Transverse colon (tissue), 4 donors: ENCODE measurements at regions of chr9 and their contacts with region 1.

Region 1: GRCh38 chr9:19967216-19967887 is 178.5 kb upstream of the SLC24A2 start:
- DNase-seq: no peak
- H3K4me3 ChIP-seq: no peak overlapping the region
- H3K27ac ChIP-seq: no peak overlapping the region
- H3K4me1 ChIP-seq: no peaks in the 10 kb centered on the region
- H3K27me3 ChIP-seq: no peaks in the 10 kb centered on the region
- CTCF ChIP-seq: no peak
- EP300 ChIP-seq: no peak
- POLR2A ChIP-seq: no peak

Region 2: DNA sequence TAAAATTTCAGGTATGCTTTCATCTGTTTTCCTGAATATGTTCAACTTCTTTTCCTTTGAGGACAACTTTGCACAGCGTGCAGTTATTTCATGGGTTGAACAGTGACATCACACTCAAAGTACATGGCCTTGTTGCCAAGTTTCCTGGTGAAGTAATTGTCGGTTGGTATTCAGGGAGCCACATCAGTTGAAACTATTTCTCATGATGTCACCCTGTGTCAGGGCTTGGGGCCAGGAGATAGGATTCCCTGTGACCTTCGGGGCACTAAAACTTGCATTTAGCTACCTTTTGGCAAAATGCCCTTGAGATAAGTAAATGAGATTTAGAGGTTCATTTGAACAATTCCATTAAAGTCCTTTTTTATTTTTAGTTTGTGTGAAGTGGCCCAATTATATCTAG is 2004.6 kb before region 1 on chr9:
- in situ Hi-C with region 1: no loop called
- intact Hi-C with region 1: loop called (anchors 10 kb)
- DNase-seq: peak; percentile 11
- H3K4me3 ChIP-seq: no peak overlapping the region
- H3K27ac ChIP-seq: no peak overlapping the region
- H3K4me1 ChIP-seq: peaks cover 0 to 5% (median 0%) of the 10 kb centered on the region in 4 donors
- H3K27me3 ChIP-seq: no peaks in the 10 kb centered on the region
- CTCF ChIP-seq: no peak
- EP300 ChIP-seq: no peak
- POLR2A ChIP-seq: no peak

Region 3: GRCh38 chr9:19741178-19741577 is 226.2 kb before region 1 on chr9:
- in situ Hi-C with region 1: no loop called
- intact Hi-C with region 1: no loop called
- DNase-seq: no peak
- H3K4me3 ChIP-seq: no peak overlapping the region
- H3K27ac ChIP-seq: no peak overlapping the region
- H3K4me1 ChIP-seq: no peaks in the 10 kb centered on the region
- H3K27me3 ChIP-seq: no peaks in the 10 kb centered on the region
- CTCF ChIP-seq: no peak
- EP300 ChIP-seq: no peak
- POLR2A ChIP-seq: no peak